ENCODE measurements at regions of chr14 and their contacts with region 1.

Region 1: GRCh38 chr14:74493343-74494261 is at the start of gene ISCA2:
- H3K4me3 Mint-ChIP-seq: no peak within 1 kb of the TSS
- H3K27ac Mint-ChIP-seq: no peak within 1 kb of the TSS
- H3K4me1 Mint-ChIP-seq: peaks cover 33% of the 10 kb centered on the region
- H3K27me3 Mint-ChIP-seq: no peaks in the 10 kb centered on the region

Region 2: DNA sequence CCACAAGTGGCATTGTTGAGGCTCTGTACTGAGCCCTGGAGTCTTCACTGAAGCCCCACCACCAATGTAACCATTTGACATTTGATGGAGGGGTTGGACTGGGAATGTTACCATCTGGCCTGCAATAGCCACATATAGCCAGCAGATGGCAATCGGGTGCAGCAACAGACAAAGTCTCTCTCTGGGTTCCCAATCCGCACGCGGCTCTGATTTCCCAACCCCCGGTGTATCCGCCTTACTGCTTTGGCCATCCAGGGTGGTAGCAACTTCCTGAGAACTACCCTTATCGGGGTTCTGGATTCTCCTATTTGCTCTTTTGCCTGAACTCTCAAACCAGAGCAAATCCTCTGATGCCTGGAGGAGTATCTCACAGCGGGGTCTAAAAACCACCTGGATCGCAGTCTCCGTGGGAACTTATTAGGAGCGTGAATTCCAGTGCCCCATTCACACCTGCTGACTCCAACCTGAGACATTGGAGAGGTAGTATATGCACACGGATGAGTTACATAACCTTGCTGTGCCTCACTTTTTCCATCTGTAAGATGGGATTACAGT is 131.2 kb before region 1 on chr14:
- intact Hi-C with region 1: loop called (anchors 5 kb)
- H3K4me3 Mint-ChIP-seq: no peak overlapping the region
- H3K27ac Mint-ChIP-seq: no peak overlapping the region
- H3K4me1 Mint-ChIP-seq: peaks cover 5% of the 10 kb centered on the region
- H3K27me3 Mint-ChIP-seq: peaks cover 19% of the 10 kb centered on the region

Region 3: GRCh38 chr14:74612350-74613021 is 118.9 kb after region 1 on chr14:
- intact Hi-C with region 1: loop called (anchors 5 kb)
- H3K4me3 Mint-ChIP-seq: peak overlapping the region; percentile 78
- H3K27ac Mint-ChIP-seq: peak overlapping the region; percentile 76
- H3K4me1 Mint-ChIP-seq: peaks cover 66% of the 10 kb centered on the region
- H3K27me3 Mint-ChIP-seq: peaks cover 46% of the 10 kb centered on the region

Region 4: DNA sequence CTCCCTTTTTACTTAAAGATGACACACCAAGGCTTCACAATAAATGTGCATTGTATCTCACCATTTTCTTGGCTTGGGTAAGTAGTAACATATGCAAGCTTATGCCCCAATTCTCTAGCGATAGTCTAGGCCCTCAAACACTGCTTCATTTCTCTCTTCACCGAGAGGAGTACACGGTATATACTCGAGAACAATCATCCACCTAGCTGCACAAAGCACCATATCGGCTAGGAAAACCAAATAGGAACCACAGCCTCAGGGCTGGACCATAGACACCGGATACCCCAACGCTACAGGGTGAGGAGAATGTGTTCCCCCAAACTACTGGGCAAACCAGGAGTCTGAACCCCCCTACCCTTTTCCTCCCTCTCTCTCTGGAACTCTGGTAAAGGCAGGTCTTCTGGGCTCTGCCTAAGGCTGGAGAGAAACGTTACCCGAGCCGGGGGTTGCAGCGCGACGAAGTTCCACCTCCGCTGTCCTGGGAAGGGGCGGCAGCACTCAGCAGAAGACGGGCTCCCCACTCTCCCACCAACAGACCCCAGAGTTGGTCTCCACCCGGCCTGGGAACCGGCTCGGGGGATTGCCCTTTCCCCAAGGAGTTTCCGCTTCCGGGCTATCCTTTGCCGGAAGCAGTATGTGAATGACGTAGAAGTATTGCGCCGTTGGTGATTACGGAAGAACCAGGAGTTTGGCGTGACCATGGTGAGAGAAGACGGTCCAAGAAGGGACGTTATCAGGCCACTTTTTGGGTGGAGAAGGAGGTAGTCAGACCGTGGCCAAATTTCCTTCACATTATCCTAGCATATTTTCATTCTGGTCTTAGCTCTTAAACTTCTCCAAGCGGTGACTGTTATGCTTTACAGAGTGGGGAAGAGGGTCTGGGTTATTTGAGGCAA is 219.1 kb after region 1 on chr14 and contains the starts of genes AREL1 and FCF1:
- intact Hi-C with region 1: loop called (anchors 2 kb)
- H3K4me3 Mint-ChIP-seq: peak within 1 kb of the TSS; percentile 94
- H3K27ac Mint-ChIP-seq: peak within 1 kb of the TSS; percentile 98
- H3K4me1 Mint-ChIP-seq: peaks cover 18% of the 10 kb centered on the region
- H3K27me3 Mint-ChIP-seq: no peaks in the 10 kb centered on the region

Region 5: DNA sequence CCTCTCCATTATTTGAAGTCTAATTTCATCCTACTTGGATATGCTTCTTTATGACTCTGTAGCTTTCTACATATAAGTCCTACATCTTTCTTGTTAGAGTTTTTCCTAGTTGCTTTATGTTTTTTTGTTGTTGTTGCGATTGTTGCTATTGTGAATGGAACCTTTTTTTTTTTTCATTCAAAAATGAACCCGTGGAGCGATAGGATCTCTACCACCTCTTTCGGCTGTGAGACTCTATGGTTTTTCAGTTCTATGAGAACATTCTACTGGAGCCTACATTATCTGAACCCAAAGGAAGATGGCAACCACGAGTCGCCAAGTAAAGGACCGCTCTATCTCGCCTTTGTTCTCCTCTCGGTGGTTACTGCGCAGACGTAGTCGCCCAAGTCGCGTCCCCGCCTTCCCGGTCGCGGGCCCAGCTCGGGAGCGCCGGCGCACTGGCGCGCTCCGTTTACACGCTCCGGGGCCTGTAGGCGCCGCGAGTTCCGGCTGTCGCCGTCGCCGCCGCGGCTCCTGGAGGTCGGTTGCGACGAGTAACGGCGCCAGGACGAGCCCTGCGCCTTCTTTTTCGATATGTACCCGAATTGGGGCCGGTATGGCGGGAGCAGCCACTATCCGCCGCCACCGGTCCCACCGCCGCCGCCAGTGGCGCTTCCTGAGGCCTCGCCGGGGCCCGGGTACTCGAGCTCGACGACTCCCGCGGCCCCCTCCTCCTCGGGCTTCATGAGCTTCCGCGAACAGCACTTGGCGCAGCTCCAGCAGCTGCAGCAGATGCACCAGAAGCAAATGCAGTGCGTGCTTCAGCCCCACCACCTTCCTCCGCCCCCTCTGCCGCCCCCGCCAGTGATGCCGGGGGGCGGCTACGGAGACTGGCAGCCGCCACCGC is 269.6 kb after region 1 on chr14 and contains the start of gene YLPM1:
- intact Hi-C with region 1: loop called (anchors 5 kb)
- H3K4me3 Mint-ChIP-seq: peak within 1 kb of the TSS; percentile 99
- H3K27ac Mint-ChIP-seq: peak within 1 kb of the TSS; percentile 90
- H3K4me1 Mint-ChIP-seq: peaks cover 40% of the 10 kb centered on the region
- H3K27me3 Mint-ChIP-seq: peaks cover 3% of the 10 kb centered on the region

Measured in dendritic cell treated with granulocyte-macrophage colony-stimulating factor and Interleukin-4, amounts not matched to agents 40 ng/mL and 50 ng/mL, for 4 days (primary cell).